Activated naive CD4-positive, alpha-beta T cell treated with anti-CD3 and anti-CD28 coated beads for 36 hours (primary cell): ENCODE measurements at regions of chr17 and their contacts with region 1.

Region 1: DNA sequence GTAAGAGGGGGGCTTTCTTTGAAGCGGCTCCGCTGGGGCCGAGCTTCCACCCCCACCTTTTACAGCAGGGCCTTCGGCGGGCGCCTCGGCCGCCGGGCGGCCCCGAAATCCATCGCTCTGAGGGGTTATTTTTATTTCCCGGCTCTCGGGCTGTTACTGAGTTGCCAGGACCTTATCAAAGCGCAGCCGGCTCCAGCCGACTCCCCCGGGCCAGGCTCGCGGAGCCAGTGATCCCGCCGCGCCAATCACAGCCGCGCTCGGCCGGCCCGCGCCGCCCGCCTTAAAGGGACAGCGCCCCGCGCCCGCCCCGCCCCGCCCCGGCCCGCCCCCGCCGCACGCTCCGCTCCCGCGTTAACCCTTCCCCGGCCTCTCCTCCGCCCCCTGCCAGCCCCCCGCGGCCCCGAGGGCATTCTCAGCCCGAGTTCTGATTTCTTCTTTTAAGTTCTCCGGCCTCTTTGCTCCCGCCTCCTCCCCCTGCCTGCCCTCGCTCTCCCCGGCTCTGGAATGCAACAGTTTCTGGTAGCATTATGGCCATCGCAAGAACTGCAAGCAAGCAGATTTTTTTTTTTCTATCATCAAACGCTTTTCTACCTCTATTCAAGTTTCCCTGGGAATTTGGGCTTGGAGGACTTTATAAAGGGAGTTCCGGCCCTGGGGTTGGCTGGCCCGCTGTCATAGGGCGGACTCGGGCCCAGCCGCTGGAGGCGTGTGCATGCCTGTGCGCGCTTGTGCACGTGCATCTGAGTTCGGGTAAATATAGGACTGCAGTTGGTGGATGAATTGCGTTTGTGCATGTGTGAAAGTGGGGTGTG is at the start of gene AXIN2:
- DNase-seq: peak; percentile 87
- H3K4me3 Mint-ChIP-seq: peak within 1 kb of the TSS; percentile 74
- H3K27ac Mint-ChIP-seq: peak within 1 kb of the TSS; percentile 59
- H3K4me1 Mint-ChIP-seq: peaks cover 22% of the 10 kb centered on the region
- H3K27me3 Mint-ChIP-seq: peaks cover 2% of the 10 kb centered on the region
- total RNA-seq, gene AXIN2: 2.3 to 2.5 TPM

Region 2: DNA sequence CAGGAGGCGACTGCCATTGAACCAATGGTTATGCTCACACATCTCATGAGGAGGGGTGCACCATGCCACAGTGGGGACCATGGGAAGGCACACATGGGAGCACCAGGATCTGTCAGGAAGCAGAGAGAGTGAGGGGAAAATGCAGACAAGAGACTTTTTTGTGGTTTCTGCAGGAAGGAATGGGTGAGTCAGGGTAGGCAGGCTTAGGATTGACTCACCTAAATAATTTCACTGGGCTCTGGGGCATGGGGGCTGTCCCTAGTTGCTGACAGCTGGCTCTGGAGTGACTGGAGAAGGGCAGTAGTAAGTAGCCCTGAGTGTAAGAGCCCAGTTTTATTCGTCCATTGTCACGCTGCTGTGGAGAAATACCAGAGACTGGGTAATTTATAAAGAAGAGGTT is 202.6 kb before region 1 on chr17:
- CTCF ChIA-PET with region 1: no interaction called
- intact Hi-C with region 1: loop called (anchors 1 kb)
- DNase-seq: peak; percentile 78
- H3K4me3 Mint-ChIP-seq: no peak overlapping the region
- H3K27ac Mint-ChIP-seq: no peak overlapping the region
- H3K4me1 Mint-ChIP-seq: peaks cover 20% of the 10 kb centered on the region
- H3K27me3 Mint-ChIP-seq: no peaks in the 10 kb centered on the region